ENCODE measurements at regions of chrX and their contacts with region 1.

Region 1: DNA sequence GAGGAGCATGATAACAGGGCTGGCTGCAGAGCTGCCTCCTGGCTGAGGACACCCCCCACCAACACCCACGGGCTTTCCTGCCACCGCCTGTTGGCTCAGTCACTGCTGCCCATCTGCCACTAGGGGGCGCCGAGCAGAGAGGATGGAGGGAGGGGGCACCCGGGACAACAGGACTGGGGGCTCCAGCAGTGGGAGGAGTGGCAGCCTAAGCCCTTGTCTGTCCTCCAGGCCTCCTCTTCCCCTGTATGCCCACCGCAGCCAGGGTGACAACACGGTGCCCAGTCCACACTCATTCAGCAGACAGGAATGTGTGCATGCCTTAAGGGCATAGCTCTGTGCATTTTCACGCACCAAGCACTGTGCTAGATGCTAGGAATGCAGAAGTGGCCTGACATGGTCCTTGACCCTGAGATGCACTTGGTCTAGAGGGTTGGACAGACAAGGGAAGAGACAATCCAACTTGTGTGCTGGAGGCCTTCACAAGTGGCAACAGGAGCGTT is 149.9 kb downstream of the AMMECR1 start:
- DNase-seq: peak; percentile 27
- H3K4me3 ChIP-seq: no peak overlapping the region
- H3K27ac ChIP-seq: no peak overlapping the region
- H3K4me1 ChIP-seq: peaks cover 12% of the 10 kb centered on the region
- H3K27me3 ChIP-seq: no peaks in the 10 kb centered on the region
- CTCF ChIP-seq: peak; percentile 40 to 60

Region 2: GRCh38 chrX:110210417-110211139 is 42.6 kb after region 1 on chrX:
- CTCF ChIA-PET with region 1: no interaction called
- dilution Hi-C with region 1: no loop called
- in situ Hi-C with region 1: no loop called
- intact Hi-C with region 1: loop called (anchors 5 kb)
- DNase-seq: peak; percentile 84
- H3K4me3 ChIP-seq: no peak overlapping the region
- H3K27ac ChIP-seq: peak overlapping the region; percentile 84
- H3K4me1 ChIP-seq: peaks cover 33% of the 10 kb centered on the region
- H3K27me3 ChIP-seq: no peaks in the 10 kb centered on the region
- CTCF ChIP-seq: no peak

Region 3: GRCh38 chrX:110241816-110242215 is 73.8 kb after region 1 on chrX:
- CTCF ChIA-PET with region 1: no interaction called
- dilution Hi-C with region 1: no loop called
- in situ Hi-C with region 1: no loop called
- intact Hi-C with region 1: no loop called
- DNase-seq: no peak
- H3K4me3 ChIP-seq: no peak overlapping the region
- H3K27ac ChIP-seq: peak overlapping the region; percentile 84
- H3K4me1 ChIP-seq: peaks cover 13% of the 10 kb centered on the region
- H3K27me3 ChIP-seq: no peaks in the 10 kb centered on the region
- CTCF ChIP-seq: no peak

Region 4: GRCh38 chrX:110258552-110258951 is 90.5 kb after region 1 on chrX:
- CTCF ChIA-PET with region 1: no interaction called
- dilution Hi-C with region 1: no loop called
- in situ Hi-C with region 1: no loop called
- intact Hi-C with region 1: no loop called
- DNase-seq: peak; percentile 28
- H3K4me3 ChIP-seq: no peak overlapping the region
- H3K27ac ChIP-seq: no peak overlapping the region
- H3K4me1 ChIP-seq: peaks cover 6% of the 10 kb centered on the region
- H3K27me3 ChIP-seq: peaks cover 1% of the 10 kb centered on the region
- CTCF ChIP-seq: no peak

Region 5: GRCh38 chrX:110412971-110413721 is 245.1 kb after region 1 on chrX:
- CTCF ChIA-PET with region 1: interaction called, 3 read pairs
- dilution Hi-C with region 1: no loop called
- in situ Hi-C with region 1: loop called in 1 of 2 experiments (anchors 5 kb)
- intact Hi-C with region 1: no loop called
- DNase-seq: peak; percentile 48
- H3K4me3 ChIP-seq: no peak overlapping the region
- H3K27ac ChIP-seq: no peak overlapping the region
- H3K4me1 ChIP-seq: peaks cover 35% of the 10 kb centered on the region
- H3K27me3 ChIP-seq: no peaks in the 10 kb centered on the region
- CTCF ChIP-seq: peak; percentile 79 to 93

Region 6: DNA sequence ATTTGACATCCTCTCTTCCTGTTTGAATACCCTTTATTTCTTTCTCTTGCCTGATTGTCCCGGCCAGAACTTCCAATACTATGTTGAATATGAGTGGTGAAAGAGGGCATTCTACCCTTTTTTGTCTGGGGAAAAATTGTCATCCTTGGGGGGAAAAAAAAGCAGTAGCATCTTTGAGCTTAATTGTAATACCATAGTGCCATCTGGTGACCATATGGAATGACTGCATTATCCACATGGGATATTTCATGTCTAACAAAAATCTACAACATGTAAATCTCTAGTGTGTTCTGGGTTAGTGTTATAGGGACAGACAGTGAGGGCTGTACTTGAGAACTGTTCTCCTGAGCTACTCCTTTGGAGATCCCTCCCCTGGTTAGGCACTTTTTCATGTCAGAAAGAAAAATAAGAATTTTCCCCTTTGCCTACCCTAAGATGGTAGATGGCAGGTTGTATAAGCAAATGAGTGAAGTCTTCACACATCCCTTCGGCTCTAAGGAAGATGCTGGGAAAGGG is 1076.3 kb after region 1 on chrX:
- CTCF ChIA-PET with region 1: no interaction called
- dilution Hi-C with region 1: no loop called
- in situ Hi-C with region 1: no loop called
- intact Hi-C with region 1: loop called (anchors 5 kb)
- DNase-seq: peak; percentile 5
- H3K4me3 ChIP-seq: no peak overlapping the region
- H3K27ac ChIP-seq: no peak overlapping the region
- H3K4me1 ChIP-seq: no peaks in the 10 kb centered on the region
- H3K27me3 ChIP-seq: no peaks in the 10 kb centered on the region
- CTCF ChIP-seq: peak; percentile 62 to 63

Measured in mammary epithelial cell (primary cell).